CD8-positive, alpha-beta T cell (primary cell): ENCODE measurements at regions of chr22 and their contacts with region 1.

Region 1: GRCh38 chr22:50030297-50031188 is 18.0 kb upstream of the IL17REL start:
- DNase-seq: peak; percentile 59 to 90 (median 83)
- ATAC-seq: peak; percentile 93
- H3K4me3 ChIP-seq: no peak overlapping the region
- H3K4me3 Mint-ChIP-seq: no peak overlapping the region
- H3K27ac ChIP-seq: no peak overlapping the region
- H3K27ac Mint-ChIP-seq: no peak overlapping the region
- H3K4me1 ChIP-seq: peaks cover 20% of the 10 kb centered on the region
- H3K4me1 Mint-ChIP-seq: peaks cover 3% of the 10 kb centered on the region
- H3K27me3 ChIP-seq: peaks cover 0 to 5% of the 10 kb centered on the region in 2 experiments
- H3K27me3 Mint-ChIP-seq: no peaks in the 10 kb centered on the region
- CTCF ChIP-seq: peak; percentile 90

Region 2: DNA sequence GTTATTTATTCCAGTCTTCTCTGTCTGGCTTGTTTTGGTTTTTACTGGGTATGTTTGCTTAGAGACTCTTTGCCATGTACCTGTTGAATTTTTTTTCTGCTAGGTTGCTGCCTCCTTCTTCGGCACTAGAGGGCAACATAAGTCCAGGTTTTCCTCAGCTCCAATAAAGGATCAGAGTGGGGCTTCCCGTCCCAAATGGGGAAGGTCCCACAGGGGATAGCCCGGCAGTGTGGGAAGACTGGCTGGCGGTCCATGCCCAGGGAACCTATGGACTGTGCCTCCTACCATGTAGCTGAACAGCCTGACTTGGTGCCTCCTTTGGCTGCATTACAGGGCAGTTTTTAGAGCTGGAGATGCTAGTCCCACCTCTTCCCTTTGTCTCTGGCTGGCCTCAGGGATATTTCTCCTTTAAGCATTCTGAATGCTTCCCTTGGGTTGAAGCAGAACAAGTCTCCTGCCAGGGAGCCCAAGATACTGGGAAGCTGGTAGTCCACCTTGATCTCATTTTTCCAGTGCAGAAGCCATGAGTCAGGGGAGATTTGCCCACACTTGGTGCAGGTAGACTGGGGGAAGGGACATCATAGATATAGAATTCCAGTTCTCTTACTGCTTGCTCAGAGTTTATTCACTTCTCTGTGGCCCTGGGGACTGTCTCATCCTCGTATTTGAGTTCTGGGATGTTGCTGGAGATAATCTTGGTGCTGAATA is 263.0 kb before region 1 on chr22:
- CTCF ChIA-PET with region 1: interaction called, 28 read pairs
- POLR2A ChIA-PET with region 1: no interaction called
- intact Hi-C with region 1: loop called in 1 of 2 experiments (anchors 1 kb)
- DNase-seq: peak in 3 of 9 experiments; percentile 62 to 71 (median 64)
- ATAC-seq: peak; percentile 24
- H3K4me3 ChIP-seq: no peak overlapping the region
- H3K4me3 Mint-ChIP-seq: no peak overlapping the region
- H3K27ac ChIP-seq: no peak overlapping the region
- H3K27ac Mint-ChIP-seq: peak overlapping the region; percentile 19
- H3K4me1 ChIP-seq: peaks cover 3% of the 10 kb centered on the region
- H3K4me1 Mint-ChIP-seq: peaks cover 12% of the 10 kb centered on the region
- H3K27me3 ChIP-seq: no peaks in the 10 kb centered on the region
- H3K27me3 Mint-ChIP-seq: no peaks in the 10 kb centered on the region
- CTCF ChIP-seq: peak; percentile 71

Region 3: DNA sequence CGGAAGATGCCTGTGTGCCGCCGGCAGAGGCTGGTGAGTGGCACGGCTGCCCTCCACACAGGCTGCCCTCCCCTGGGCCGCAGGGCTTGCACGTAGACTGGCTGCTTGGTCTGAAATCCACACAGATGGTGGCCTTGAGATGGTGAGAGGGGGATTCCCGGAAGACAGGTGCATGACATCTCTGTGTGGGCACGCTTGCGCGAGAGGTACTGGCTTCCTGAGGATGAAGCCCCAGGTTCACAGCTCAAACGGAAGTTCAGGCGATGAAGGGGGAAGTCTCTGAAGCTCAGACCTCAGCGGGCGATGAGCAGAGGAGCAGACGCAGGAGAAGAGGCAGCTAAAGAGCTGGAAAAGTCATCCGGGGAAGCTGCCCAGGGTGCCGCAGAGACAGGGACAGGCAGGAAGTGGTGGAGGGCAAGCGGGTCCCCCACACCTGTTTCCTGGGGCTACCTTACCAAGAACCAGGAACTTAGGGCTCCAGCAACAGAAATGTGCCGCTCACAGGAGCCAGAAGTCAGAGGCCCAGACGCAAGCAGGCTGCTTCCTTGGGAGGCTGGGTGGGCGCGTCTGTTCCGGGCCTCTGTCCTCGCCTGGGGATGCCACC is 104.9 kb before region 1 on chr22:
- CTCF ChIA-PET with region 1: interaction called, 69 read pairs
- POLR2A ChIA-PET with region 1: interaction called, 3 read pairs
- intact Hi-C with region 1: loop called in 1 of 2 experiments (anchors 1 kb)
- DNase-seq: peak; percentile 49 to 96 (median 77)
- ATAC-seq: peak; percentile 89
- H3K4me3 ChIP-seq: peak overlapping the region; percentile 21 to 39
- H3K4me3 Mint-ChIP-seq: peak overlapping the region; percentile 72
- H3K27ac ChIP-seq: peak overlapping the region; percentile 55 to 93
- H3K27ac Mint-ChIP-seq: peak overlapping the region; percentile 96
- H3K4me1 ChIP-seq: peaks cover 26% of the 10 kb centered on the region
- H3K4me1 Mint-ChIP-seq: peaks cover 29% of the 10 kb centered on the region
- H3K27me3 ChIP-seq: no peaks in the 10 kb centered on the region
- H3K27me3 Mint-ChIP-seq: no peaks in the 10 kb centered on the region
- CTCF ChIP-seq: no peak

Region 4: DNA sequence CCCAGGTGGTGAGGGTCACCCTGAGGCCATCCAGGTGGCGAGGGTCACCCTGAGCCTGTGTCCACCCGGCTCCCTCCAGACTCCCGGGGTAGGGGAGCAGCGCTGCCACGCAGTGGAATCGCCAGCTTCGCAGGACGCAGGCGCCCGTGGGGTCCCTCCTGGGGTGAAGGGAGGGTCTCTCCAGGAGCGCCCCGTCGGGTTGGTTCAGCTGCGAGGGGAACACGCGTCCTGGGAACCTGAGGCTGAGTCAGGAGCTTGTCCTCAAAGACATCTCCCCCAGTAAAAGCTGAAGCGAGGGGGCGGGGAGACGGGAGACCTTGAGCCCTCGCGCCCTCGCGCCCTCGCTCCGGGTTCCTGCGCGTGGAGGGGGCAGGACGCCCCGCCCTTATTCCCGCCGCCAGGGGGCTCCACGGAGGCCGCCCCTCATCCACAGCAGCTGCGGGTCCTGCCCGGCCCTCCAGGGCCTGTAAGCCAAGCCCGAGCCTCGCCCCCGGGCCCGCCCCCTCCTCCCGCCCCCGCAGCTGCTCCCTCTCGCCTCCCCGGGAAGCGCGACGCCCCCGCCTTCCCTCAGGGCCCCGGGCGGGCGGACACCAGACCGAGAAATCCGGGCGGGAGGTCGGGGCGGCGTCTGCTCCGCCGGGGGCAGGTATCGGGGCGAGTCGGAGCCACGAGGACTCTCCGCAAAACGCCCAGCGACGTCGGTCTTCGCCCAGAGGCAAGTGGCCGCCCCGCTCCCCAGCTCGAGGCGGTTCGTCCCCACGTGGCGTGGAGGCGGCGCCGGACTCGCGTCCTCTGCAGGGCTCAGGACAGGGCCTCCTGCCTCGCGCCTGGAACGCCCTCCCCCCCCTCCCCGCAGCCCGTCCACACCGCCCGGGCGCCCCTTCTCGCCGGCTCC is 47.1 kb before region 1 on chr22:
- CTCF ChIA-PET with region 1: interaction called, 8 read pairs
- POLR2A ChIA-PET with region 1: no interaction called
- intact Hi-C with region 1: loop called in 1 of 2 experiments (anchors 1 kb)
- DNase-seq: peak in 6 of 9 experiments; percentile 45 to 74 (median 67)
- ATAC-seq: peak; percentile 85
- H3K4me3 ChIP-seq: no peak overlapping the region
- H3K4me3 Mint-ChIP-seq: no peak overlapping the region
- H3K27ac ChIP-seq: no peak overlapping the region
- H3K27ac Mint-ChIP-seq: no peak overlapping the region
- H3K4me1 ChIP-seq: peaks cover 4% of the 10 kb centered on the region
- H3K4me1 Mint-ChIP-seq: peaks cover 3% of the 10 kb centered on the region
- H3K27me3 ChIP-seq: peaks cover 0 to 9% of the 10 kb centered on the region in 2 experiments
- H3K27me3 Mint-ChIP-seq: peaks cover 20% of the 10 kb centered on the region
- CTCF ChIP-seq: peak; percentile 46

Region 5: GRCh38 chr22:49992921-49993648 is 37.5 kb before region 1 on chr22:
- CTCF ChIA-PET with region 1: interaction called, 36 read pairs
- POLR2A ChIA-PET with region 1: no interaction called
- intact Hi-C with region 1: loop called (anchors 1 kb)
- DNase-seq: peak; percentile 39 to 85 (median 74)
- ATAC-seq: peak; percentile 95
- H3K4me3 ChIP-seq: no peak overlapping the region
- H3K4me3 Mint-ChIP-seq: no peak overlapping the region
- H3K27ac ChIP-seq: no peak overlapping the region
- H3K27ac Mint-ChIP-seq: peak overlapping the region; percentile 21
- H3K4me1 ChIP-seq: peaks cover 8% of the 10 kb centered on the region
- H3K4me1 Mint-ChIP-seq: peaks cover 5% of the 10 kb centered on the region
- H3K27me3 ChIP-seq: no peaks in the 10 kb centered on the region
- H3K27me3 Mint-ChIP-seq: peaks cover 3% of the 10 kb centered on the region
- CTCF ChIP-seq: peak; percentile 77

Region 6: DNA sequence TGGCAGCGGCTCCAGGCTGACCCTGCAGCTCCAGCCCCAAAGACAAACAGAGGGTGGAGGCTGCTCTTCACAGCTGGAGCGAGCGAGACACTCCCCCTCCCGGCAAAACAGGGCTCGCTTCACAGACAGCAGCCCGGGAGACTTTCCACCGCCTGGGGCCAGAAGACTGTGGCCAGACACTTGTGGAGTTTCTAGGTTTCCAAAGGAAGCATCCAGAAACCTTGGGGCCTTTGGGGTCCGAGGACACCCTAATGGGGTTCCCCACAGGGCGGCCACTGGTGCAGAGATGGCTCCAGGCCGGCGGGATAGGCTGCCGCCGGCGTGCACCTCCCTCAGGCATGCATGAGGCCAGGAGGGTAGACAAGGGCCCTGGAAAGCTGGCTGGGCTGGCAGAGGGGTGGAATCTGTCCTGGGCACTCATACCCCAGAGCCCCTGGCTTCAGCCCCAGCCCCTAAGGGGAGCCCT is 17.8 kb before region 1 on chr22 and contains the start of gene IL17REL:
- CTCF ChIA-PET with region 1: interaction called, 24 read pairs
- POLR2A ChIA-PET with region 1: interaction called, 4 read pairs
- intact Hi-C with region 1: no loop called
- DNase-seq: no peak
- ATAC-seq: no peak
- H3K4me3 ChIP-seq: no peak within 1 kb of the TSS
- H3K4me3 Mint-ChIP-seq: peak within 1 kb of the TSS; percentile 35
- H3K27ac ChIP-seq: no peak within 1 kb of the TSS
- H3K27ac Mint-ChIP-seq: peak within 1 kb of the TSS; percentile 64
- H3K4me1 ChIP-seq: peaks cover 36% of the 10 kb centered on the region
- H3K4me1 Mint-ChIP-seq: peaks cover 18% of the 10 kb centered on the region
- H3K27me3 ChIP-seq: peaks cover 12 to 20% of the 10 kb centered on the region in 2 experiments
- H3K27me3 Mint-ChIP-seq: peaks cover 10% of the 10 kb centered on the region
- CTCF ChIP-seq: no peak
- total RNA-seq, gene IL17REL: not detected

Region 7: DNA sequence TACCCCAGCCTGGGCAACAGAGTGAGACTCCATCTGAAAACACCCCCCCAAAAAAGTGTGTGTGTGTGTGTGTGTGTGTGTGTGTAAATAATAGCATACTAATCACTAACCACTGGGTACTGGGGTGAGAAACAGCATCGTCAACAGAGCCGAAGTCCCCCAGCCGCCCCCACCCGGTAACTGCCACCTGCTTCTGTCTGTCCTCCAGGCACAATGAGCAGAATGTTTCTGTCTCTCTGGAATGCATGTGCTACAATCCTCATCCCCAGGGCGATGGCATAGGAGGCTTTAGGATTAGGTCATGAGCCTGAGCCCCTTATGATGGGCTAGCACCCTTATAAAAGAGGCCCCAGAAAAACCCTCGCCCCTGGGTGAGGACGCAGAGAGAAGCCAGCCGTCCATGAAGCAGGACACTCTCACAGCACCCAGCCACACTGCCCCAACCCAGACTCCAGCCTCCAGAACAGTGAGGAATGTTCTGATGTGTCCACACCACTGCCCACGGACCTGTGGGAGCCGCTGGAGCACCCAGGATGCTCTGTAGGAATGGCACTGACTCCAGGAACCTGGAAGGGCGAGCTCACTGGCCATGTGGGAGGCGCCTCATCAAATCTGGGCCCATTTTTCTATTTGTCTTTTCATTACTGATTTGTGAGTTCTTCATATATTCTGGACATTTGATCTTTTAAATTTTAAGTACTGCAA is 17.7 kb after region 1 on chr22:
- CTCF ChIA-PET with region 1: no interaction called
- POLR2A ChIA-PET with region 1: no interaction called
- intact Hi-C with region 1: no loop called
- DNase-seq: no peak
- ATAC-seq: no peak
- H3K4me3 ChIP-seq: no peak overlapping the region
- H3K4me3 Mint-ChIP-seq: no peak overlapping the region
- H3K27ac ChIP-seq: no peak overlapping the region
- H3K27ac Mint-ChIP-seq: no peak overlapping the region
- H3K4me1 ChIP-seq: peaks cover 7% of the 10 kb centered on the region
- H3K4me1 Mint-ChIP-seq: peaks cover 12% of the 10 kb centered on the region
- H3K27me3 ChIP-seq: peaks cover 0 to 2% of the 10 kb centered on the region in 2 experiments
- H3K27me3 Mint-ChIP-seq: peaks cover 12% of the 10 kb centered on the region
- CTCF ChIP-seq: no peak